HepG2 (cell line): ENCODE measurements at regions of chr15 and their contacts with region 1.

Region 1: GRCh38 chr15:47711654-47712053 is 5.7 kb upstream of the SEMA6D start:
- DNase-seq: peak; percentile 1
- ATAC-seq: no peak
- H3K4me3 ChIP-seq: no peak overlapping the region
- H3K27ac ChIP-seq: no peak overlapping the region
- H3K4me1 ChIP-seq: no peaks in the 10 kb centered on the region
- H3K27me3 ChIP-seq: peaks cover 2 to 14% of the 10 kb centered on the region in 2 experiments; a peak in 2 of 5 replicates
- CTCF ChIP-seq: peak; percentile 41
- EP300 ChIP-seq: no peak
- POLR2A ChIP-seq: no peak
- RAD21 ChIP-seq: no peak

Region 2: DNA sequence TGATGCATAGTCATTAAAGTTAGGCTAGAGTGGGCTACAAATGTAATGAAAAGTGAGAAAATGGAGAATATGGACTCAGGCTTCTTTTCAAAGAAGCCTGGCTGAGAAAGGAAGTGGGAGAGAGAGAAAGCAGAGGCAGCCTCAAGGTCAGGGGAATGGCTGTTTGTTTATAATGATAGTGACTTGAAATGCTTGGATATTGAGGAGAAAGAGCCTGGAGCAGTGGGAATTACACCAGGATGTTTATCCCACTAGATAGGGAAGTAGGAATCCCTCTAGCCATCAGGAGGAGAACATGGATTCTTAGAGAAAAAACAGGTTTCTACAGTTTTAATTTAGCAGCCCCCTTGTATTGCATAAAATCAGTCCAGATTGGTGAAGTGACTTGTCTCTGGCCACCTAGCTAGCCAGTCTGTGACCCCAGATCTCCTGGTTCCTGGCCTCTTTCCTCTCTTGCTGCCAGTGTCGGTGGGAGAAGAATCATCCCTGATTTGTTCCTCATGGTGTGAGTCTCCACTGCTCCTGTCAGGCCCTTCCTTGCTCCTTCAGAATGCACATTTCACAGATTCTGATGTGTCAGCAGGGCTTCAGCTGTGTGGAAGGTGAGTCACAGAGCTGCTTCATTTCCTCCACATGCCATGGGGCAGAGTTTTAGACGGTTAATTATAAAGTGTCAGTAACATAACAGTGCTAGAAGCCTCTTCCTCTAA is 38.5 kb after region 1 on chr15:
- CTCF ChIA-PET with region 1: no interaction called
- POLR2A ChIA-PET with region 1: no interaction called
- in situ Hi-C with region 1: no loop called
- intact Hi-C with region 1: no loop called
- DNase-seq: no peak
- ATAC-seq: no peak
- H3K4me3 ChIP-seq: no peak overlapping the region
- H3K27ac ChIP-seq: no peak overlapping the region
- H3K4me1 ChIP-seq: no peaks in the 10 kb centered on the region
- H3K27me3 ChIP-seq: no peaks in the 10 kb centered on the region
- CTCF ChIP-seq: no peak
- EP300 ChIP-seq: no peak
- POLR2A ChIP-seq: no peak
- RAD21 ChIP-seq: no peak

Region 3: GRCh38 chr15:47987908-47988532 is 276.4 kb after region 1 on chr15:
- CTCF ChIA-PET with region 1: no interaction called
- POLR2A ChIA-PET with region 1: no interaction called
- in situ Hi-C with region 1: no loop called
- intact Hi-C with region 1: loop called (anchors 1 kb)
- DNase-seq: peak; percentile 35
- ATAC-seq: peak; percentile 90
- H3K4me3 ChIP-seq: no peak overlapping the region
- H3K27ac ChIP-seq: no peak overlapping the region
- H3K4me1 ChIP-seq: no peaks in the 10 kb centered on the region
- H3K27me3 ChIP-seq: no peaks in the 10 kb centered on the region
- CTCF ChIP-seq: peak; percentile 60
- EP300 ChIP-seq: no peak
- POLR2A ChIP-seq: no peak
- RAD21 ChIP-seq: no peak; the same call in 1 of the 2 replicates